ENCODE measurements at regions of chr2 and their contacts with region 1.

Region 1: DNA sequence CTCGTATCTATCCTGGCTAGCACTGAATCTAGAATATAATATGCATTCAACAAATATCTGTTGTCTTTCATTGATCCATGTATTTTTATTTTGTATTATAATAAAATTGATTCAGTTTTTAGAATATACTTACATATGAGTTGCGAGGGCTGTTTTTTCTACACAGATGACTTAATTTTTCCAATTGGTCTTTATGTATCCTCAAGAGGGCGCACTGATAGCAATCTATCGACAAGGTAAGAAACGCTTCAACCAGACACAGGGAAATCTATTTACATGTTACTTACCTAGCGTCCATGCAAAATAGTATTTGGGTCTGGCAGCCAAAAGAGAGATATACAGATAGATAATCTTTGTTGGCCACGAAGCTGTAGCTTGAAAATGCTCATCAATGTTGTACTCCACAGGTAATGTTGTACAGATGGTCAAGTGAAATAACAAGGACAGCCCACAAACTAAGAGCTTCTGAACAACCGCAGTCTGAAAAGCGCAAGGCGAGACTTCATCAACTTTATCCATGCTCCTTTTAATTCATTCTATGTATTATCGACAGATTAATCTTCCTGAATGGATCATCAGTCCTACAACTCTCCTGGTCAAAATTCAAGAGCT is 35.5 kb upstream of the KIDINS220 start:
- DNase-seq: peak in 6 of 42 donors; percentile 20 to 56 (median 36)

Region 2: GRCh38 chr2:9003616-9004337 is 130.8 kb after region 1 on chr2 and contains the start of gene MBOAT2:
- intact Hi-C with region 1: loop called (anchors 10 kb)
- DNase-seq: peak; percentile 66 to 97 (median 91)

Measured in head of caudate nucleus (tissue), 42 donors.